Lower leg skin (tissue), 4 donors: ENCODE measurements at regions of chr14 and their contacts with region 1.

Region 1: DNA sequence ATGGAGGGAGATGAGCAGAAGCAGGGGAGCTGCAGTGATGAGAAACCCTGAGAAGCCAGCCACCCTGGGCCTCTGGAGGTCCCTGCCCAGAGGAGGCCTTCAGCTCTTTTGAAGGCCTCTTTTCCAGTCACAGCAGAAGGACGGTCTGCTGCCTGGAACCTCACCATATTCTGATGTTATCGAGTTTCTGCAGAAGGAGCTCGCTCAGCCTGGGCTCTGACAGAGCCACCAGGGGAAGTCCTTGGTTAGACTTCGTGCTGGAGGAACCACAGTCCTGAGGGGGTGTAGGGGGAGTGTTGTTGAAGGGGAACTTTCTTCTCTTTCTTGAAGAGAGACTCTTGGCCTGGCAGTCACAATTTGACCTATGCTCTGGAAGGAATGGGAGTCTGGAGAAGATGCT is 25.1 kb upstream of the BATF start:
- DNase-seq: peak in 1 of 2 donors; percentile 78
- H3K4me3 ChIP-seq: no peak overlapping the region
- CTCF ChIP-seq: no peak
- POLR2A ChIP-seq: no peak

Region 2: DNA sequence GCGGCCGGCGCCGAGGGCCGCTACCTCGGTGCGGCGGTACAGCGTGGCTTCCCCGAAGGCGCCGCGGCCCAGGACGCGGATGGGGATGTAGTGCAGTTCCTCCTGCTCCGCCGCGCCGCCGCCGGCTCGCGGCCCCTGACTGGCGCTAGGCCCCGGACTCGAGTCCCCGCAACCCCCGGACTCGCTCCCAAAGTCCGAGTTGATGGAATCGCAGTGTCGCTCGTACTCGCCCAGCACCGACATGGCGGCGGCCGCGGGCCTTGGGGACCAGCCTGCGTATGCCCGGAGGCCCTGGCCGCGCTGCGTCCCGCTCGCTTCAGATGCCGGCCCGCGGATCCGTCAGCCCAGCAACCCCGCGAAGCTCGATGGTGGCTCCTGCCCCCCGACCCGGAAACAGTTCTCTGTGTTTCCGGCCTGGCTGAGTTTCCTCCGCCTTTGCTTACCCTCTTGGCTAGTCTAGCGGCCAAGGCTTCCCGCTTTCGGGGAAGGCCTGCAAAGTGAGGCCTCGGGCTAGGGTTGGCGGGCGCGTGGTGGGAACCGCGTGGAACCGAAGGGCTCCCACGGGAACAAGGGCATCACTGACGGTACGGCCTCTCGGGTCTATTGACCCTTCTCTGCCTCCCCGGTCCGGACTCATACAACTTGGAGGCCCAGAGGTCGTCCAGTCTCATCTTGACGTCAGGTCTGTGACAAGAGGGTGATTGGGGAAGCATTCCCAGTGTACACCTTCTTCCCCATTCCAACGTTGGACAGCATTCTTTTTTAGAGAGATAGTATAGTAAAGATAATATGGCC is 370.3 kb before region 1 on chr14 and contains the start of gene NEK9:
- intact Hi-C with region 1: loop called (anchors 10 kb)
- DNase-seq: peak; percentile 87 to 98
- H3K4me3 ChIP-seq: peak within 1 kb of the TSS; percentile 50
- CTCF ChIP-seq: no peak
- POLR2A ChIP-seq: peak in 1 of 2 donors; percentile 68
- total RNA-seq, gene NEK9: 28.7 to 73.9 (median 59.4) TPM

Region 3: GRCh38 chr14:75560962-75561432 is 63.8 kb after region 1 on chr14:
- intact Hi-C with region 1: loop called (anchors 10 kb)
- DNase-seq: peak; percentile 75 to 91
- H3K4me3 ChIP-seq: no peak overlapping the region
- CTCF ChIP-seq: no peak
- POLR2A ChIP-seq: no peak